B cell (primary cell): ENCODE measurements at regions of chr13 and their contacts with region 1.

Region 1: DNA sequence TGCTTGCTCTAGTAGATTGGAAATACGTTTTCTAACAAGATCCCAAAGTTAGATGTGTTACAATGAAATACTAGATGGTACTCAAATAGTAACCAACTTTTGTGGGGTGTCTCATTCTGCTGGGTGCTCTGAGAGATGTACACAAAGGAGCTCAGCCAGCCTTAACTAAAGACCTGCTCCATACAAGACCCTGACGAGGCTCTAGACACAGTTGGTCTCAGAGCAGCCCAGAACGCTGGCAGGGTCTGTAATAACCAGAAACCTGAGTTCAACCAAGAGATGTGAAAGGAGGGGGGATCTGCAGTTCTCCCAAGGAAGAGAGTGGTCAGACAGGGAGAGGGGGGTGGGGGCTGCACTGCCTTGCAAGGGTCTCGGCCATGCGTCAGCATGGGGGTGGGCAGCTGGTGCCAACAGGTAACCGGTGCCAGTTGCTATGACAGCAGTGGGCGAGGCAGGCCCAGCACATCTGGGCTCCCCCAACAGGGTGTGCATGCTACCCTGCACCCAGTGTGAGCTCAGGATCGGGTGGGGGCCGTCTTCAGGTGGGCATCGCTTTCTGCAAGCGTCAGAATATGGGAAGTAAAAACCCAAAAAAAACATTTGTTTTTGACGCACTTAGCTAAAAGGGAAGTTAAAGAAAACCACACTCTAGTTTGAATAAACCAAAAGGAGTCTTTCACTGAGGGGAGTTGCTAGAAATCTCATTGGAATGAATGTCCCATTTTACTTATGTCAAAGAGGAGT is 68.0 kb upstream of the GPR183 start:
- DNase-seq: peak; percentile 96
- ATAC-seq: peak; percentile 78
- H3K4me3 ChIP-seq: peak overlapping the region in 4 of 5 experiments; percentile 9 to 42 (median 34)
- H3K4me3 Mint-ChIP-seq: peak overlapping the region; percentile 77
- H3K27ac ChIP-seq: peak overlapping the region; percentile 99 to 100
- H3K27ac Mint-ChIP-seq: peak overlapping the region; percentile 98
- H3K4me1 ChIP-seq: peaks cover 77 to 90% of the 10 kb centered on the region in 2 donors
- H3K4me1 Mint-ChIP-seq: peaks cover 86% of the 10 kb centered on the region
- H3K27me3 ChIP-seq: no peaks in the 10 kb centered on the region
- H3K27me3 Mint-ChIP-seq: no peaks in the 10 kb centered on the region
- CTCF ChIP-seq: no peak

Region 2: GRCh38 chr13:99200432-99201167 is 174.6 kb before region 1 on chr13 and contains the start of gene UBAC2:
- CTCF ChIA-PET with region 1: interaction called, 5 read pairs
- POLR2A ChIA-PET with region 1: interaction called, 9 read pairs
- intact Hi-C with region 1: loop called (anchors 2 kb)
- DNase-seq: peak; percentile 98
- ATAC-seq: peak; percentile 73
- H3K4me3 ChIP-seq: peak within 1 kb of the TSS; percentile 71 to 97 (median 92)
- H3K4me3 Mint-ChIP-seq: peak within 1 kb of the TSS; percentile 97
- H3K27ac ChIP-seq: peak within 1 kb of the TSS; percentile 97
- H3K27ac Mint-ChIP-seq: peak within 1 kb of the TSS; percentile 94
- H3K4me1 ChIP-seq: peaks cover 38 to 46% of the 10 kb centered on the region in 2 donors
- H3K4me1 Mint-ChIP-seq: peaks cover 54% of the 10 kb centered on the region
- H3K27me3 ChIP-seq: no peaks in the 10 kb centered on the region
- H3K27me3 Mint-ChIP-seq: no peaks in the 10 kb centered on the region
- CTCF ChIP-seq: no peak
- total RNA-seq, gene UBAC2: 52.9 and 56.3 TPM in 2 replicates

Region 3: DNA sequence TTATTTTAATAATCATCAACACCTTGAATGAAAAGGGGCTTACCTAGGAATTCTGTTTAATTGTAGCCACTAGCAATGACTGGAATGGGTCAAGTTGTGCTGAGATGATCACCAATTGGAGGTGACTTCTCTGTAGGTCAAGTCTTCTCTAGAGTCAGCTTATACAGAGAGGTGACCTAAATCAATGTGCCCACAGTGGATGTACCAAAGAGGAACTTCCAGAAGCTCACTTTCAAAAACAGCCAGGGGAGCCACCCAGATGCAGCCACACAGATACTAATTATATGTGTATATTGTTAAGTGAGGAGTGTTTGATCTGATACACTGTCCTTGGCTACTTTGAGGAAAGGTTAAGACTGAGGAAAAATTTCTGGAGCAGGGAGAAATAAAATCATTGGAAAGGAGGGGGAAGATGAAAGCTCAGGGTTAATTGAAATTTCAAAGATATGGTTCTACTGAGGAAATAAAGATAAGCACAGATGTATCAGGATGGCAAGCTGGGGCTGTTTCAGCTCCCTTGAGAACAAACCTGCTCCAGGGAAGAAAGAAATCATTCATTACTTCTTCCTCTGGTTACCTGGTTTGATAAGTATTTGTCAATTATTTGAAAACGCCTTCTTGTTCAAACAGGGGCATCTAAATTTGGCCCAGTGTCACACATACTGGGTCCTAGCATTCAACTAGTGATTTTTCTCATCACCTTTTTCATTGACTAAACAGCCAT is 73.1 kb before region 1 on chr13:
- CTCF ChIA-PET with region 1: interaction called, 58 read pairs
- POLR2A ChIA-PET with region 1: interaction called, 34 read pairs
- intact Hi-C with region 1: loop called (anchors 1 kb)
- DNase-seq: peak; percentile 57
- ATAC-seq: peak; percentile 48
- H3K4me3 ChIP-seq: peak overlapping the region in 2 of 5 experiments; percentile 1 to 95
- H3K4me3 Mint-ChIP-seq: peak overlapping the region; percentile 94
- H3K27ac ChIP-seq: peak overlapping the region; percentile 78 to 87
- H3K27ac Mint-ChIP-seq: peak overlapping the region; percentile 79
- H3K4me1 ChIP-seq: peaks cover 79 to 80% of the 10 kb centered on the region in 2 donors
- H3K4me1 Mint-ChIP-seq: peaks cover 71% of the 10 kb centered on the region
- H3K27me3 ChIP-seq: no peaks in the 10 kb centered on the region
- H3K27me3 Mint-ChIP-seq: no peaks in the 10 kb centered on the region
- CTCF ChIP-seq: no peak

Region 4: DNA sequence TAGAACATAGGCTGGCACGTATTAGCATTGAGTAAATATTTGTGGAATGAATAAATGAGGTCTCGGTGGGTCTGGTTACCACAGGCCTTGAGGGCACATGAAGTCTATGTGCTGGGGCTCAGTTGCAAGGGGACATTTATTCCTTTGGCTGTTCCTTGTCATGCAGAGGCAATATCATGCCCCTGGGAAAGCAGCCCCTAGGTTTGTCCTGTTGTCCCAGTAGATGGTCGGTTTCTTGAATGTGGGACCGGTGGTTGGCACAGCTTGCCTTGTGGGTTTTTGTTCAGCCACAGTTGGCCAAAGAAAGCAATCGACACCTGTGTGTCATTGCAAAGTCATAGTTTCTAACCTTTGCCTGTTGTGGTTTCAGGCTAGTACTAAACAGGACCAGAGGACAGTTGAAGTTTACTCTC is 43.3 kb before region 1 on chr13:
- CTCF ChIA-PET with region 1: interaction called, 19 read pairs
- POLR2A ChIA-PET with region 1: interaction called, 11 read pairs
- intact Hi-C with region 1: loop called (anchors 1 kb)
- DNase-seq: no peak
- ATAC-seq: no peak
- H3K4me3 ChIP-seq: no peak overlapping the region
- H3K4me3 Mint-ChIP-seq: no peak overlapping the region
- H3K27ac ChIP-seq: no peak overlapping the region
- H3K27ac Mint-ChIP-seq: no peak overlapping the region
- H3K4me1 ChIP-seq: peaks cover 13 to 24% of the 10 kb centered on the region in 2 donors
- H3K4me1 Mint-ChIP-seq: peaks cover 44% of the 10 kb centered on the region
- H3K27me3 ChIP-seq: no peaks in the 10 kb centered on the region
- H3K27me3 Mint-ChIP-seq: no peaks in the 10 kb centered on the region
- CTCF ChIP-seq: no peak

Region 5: DNA sequence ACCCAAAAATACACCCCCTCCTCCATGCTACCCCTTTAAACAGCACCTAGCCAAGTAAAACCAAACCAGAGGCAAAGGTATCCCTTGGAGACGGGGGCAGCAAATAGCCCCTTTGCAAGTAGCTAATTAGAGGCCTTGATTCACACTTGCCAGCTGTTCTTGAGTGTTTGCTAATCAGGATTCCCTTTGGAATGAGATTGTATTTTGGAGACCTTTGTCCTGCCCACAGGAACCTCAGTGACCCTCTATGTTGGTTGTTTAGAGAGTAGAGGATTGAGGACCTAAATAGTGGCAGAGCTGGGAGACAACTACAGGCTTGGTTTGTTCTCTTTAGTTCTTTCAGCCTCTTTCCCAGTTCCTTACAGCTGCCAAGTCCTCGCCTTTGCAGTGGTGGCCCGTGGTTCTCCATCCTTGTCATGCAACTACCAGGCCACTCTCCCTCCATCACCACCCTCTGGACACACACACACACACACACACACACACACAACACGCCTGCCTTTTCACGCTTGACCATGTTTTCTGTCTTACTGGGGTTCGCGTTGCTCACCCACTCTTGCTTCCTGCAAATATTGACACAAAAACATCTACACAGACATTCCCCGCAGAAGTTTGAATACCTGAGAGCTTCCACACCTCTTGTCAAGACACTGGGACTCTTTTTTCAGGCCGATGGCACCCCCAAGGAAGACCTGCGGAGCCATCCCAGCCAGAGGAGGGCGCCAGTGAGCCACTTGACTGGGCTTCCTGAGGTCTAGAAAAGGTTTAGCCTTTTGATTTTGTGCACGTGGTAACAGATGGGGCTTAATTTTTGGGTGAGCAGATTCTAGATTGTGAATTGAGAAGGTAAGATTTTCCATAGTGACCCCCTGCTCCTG is 12.0 kb after region 1 on chr13:
- CTCF ChIA-PET with region 1: interaction called, 69 read pairs
- POLR2A ChIA-PET with region 1: interaction called, 18 read pairs
- intact Hi-C with region 1: loop called (anchors 1 kb)
- DNase-seq: peak; percentile 89
- ATAC-seq: peak; percentile 68
- H3K4me3 ChIP-seq: no peak overlapping the region
- H3K4me3 Mint-ChIP-seq: peak overlapping the region; percentile 58
- H3K27ac ChIP-seq: peak overlapping the region; percentile 8 to 69
- H3K27ac Mint-ChIP-seq: peak overlapping the region; percentile 91
- H3K4me1 ChIP-seq: peaks cover 35 to 44% of the 10 kb centered on the region in 2 donors
- H3K4me1 Mint-ChIP-seq: peaks cover 46% of the 10 kb centered on the region
- H3K27me3 ChIP-seq: no peaks in the 10 kb centered on the region
- H3K27me3 Mint-ChIP-seq: no peaks in the 10 kb centered on the region
- CTCF ChIP-seq: peak; percentile 88

Region 6: GRCh38 chr13:99501184-99501847 is 126.2 kb after region 1 on chr13 and contains the start of gene TM9SF2:
- CTCF ChIA-PET with region 1: no interaction called
- POLR2A ChIA-PET with region 1: interaction called, 3 read pairs
- intact Hi-C with region 1: loop called (anchors 1 kb)
- DNase-seq: peak; percentile 98
- ATAC-seq: peak; percentile 60
- H3K4me3 ChIP-seq: peak within 1 kb of the TSS; percentile 75 to 89 (median 87)
- H3K4me3 Mint-ChIP-seq: peak within 1 kb of the TSS; percentile 92
- H3K27ac ChIP-seq: peak within 1 kb of the TSS; percentile 89 to 90
- H3K27ac Mint-ChIP-seq: peak within 1 kb of the TSS; percentile 98
- H3K4me1 ChIP-seq: peaks cover 63 to 65% of the 10 kb centered on the region in 2 donors
- H3K4me1 Mint-ChIP-seq: peaks cover 77% of the 10 kb centered on the region
- H3K27me3 ChIP-seq: no peaks in the 10 kb centered on the region
- H3K27me3 Mint-ChIP-seq: no peaks in the 10 kb centered on the region
- CTCF ChIP-seq: no peak
- total RNA-seq, gene TM9SF2: 63.3 and 63.6 TPM in 2 replicates